Upper lobe of right lung (tissue), 1 donor: ENCODE measurements at regions of chr13 and their contacts with region 1.

Region 1: GRCh38 chr13:99656092-99656745 is 154.9 kb downstream of the TM9SF2 start:
- DNase-seq: no peak
- ATAC-seq: peak; percentile 89
- H3K4me3 ChIP-seq: no peak overlapping the region
- H3K27ac ChIP-seq: no peak overlapping the region
- H3K4me1 ChIP-seq: peaks cover 11% of the 10 kb centered on the region
- H3K27me3 ChIP-seq: no peaks in the 10 kb centered on the region
- CTCF ChIP-seq: peak; percentile 88

Region 2: DNA sequence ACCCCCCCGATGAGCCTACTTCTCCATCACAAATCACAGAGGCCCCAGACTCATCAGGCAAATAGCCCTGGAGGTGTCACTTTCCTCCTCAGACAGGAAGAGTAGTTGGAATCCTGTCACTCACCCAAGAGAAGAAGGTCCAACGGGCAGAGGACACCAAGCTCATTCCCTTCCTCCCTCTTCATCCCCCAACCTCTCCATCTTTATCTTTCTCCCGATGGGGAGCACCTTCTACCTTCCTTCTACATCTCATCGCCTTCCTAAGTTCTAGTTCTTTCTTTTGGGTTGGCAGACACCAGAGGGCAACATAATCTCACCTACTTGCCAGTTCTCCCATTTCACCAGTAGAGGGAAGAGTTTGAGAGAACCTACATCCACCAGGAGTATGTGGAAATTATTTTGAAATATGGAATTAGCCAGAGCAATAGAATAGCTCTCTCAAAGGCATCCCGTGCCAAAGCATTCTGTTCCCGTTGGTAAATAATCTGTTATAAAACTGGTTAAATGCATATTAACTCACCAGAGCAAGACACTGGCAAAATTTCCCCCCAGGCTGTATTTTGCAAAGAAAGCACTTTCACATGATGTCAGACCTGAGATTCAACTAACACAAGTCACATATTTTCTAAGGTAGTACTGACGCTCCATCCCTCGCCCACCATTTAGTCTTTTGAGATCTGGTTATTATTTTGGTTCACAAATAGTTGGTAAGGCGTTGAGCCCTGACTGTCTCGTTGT is 260.3 kb after region 1 on chr13:
- intact Hi-C with region 1: no loop called
- DNase-seq: no peak
- ATAC-seq: peak; percentile 93
- H3K4me3 ChIP-seq: no peak overlapping the region
- H3K27ac ChIP-seq: no peak overlapping the region
- H3K4me1 ChIP-seq: no peaks in the 10 kb centered on the region
- H3K27me3 ChIP-seq: peaks cover 19% of the 10 kb centered on the region
- CTCF ChIP-seq: peak; percentile 90

Region 3: GRCh38 chr13:100514788-100515409 is 858.7 kb after region 1 on chr13:
- intact Hi-C with region 1: loop called (anchors 10 kb)
- DNase-seq: peak; percentile 88
- ATAC-seq: peak; percentile 96
- H3K4me3 ChIP-seq: no peak overlapping the region
- H3K27ac ChIP-seq: no peak overlapping the region
- H3K4me1 ChIP-seq: peaks cover 10% of the 10 kb centered on the region
- H3K27me3 ChIP-seq: no peaks in the 10 kb centered on the region
- CTCF ChIP-seq: peak; percentile 97